Ascending aorta (tissue), 2 donors: ENCODE measurements at regions of chr5 and their contacts with region 1.

Region 1: GRCh38 chr5:142259758-142260157 is 65.1 kb downstream of the SPRY4 start:
- DNase-seq: no peak
- H3K4me3 ChIP-seq: no peak overlapping the region
- H3K27ac ChIP-seq: no peak overlapping the region
- H3K4me1 ChIP-seq: no peaks in the 10 kb centered on the region
- H3K27me3 ChIP-seq: no peaks in the 10 kb centered on the region
- CTCF ChIP-seq: no peak

Region 2: GRCh38 chr5:142235870-142236609 is 23.7 kb before region 1 on chr5:
- intact Hi-C with region 1: loop called (anchors 2 kb)
- DNase-seq: no peak
- H3K4me3 ChIP-seq: no peak overlapping the region
- H3K27ac ChIP-seq: no peak overlapping the region
- H3K4me1 ChIP-seq: no peaks in the 10 kb centered on the region
- H3K27me3 ChIP-seq: no peaks in the 10 kb centered on the region
- CTCF ChIP-seq: no peak